KBM-7 (cell line): ENCODE measurements at regions of chr10 and their contacts with region 1.

Region 1: GRCh38 chr10:21265621-21266020 is 259.9 kb downstream of the SKIDA1 start:
- DNase-seq: no peak

Region 2: DNA sequence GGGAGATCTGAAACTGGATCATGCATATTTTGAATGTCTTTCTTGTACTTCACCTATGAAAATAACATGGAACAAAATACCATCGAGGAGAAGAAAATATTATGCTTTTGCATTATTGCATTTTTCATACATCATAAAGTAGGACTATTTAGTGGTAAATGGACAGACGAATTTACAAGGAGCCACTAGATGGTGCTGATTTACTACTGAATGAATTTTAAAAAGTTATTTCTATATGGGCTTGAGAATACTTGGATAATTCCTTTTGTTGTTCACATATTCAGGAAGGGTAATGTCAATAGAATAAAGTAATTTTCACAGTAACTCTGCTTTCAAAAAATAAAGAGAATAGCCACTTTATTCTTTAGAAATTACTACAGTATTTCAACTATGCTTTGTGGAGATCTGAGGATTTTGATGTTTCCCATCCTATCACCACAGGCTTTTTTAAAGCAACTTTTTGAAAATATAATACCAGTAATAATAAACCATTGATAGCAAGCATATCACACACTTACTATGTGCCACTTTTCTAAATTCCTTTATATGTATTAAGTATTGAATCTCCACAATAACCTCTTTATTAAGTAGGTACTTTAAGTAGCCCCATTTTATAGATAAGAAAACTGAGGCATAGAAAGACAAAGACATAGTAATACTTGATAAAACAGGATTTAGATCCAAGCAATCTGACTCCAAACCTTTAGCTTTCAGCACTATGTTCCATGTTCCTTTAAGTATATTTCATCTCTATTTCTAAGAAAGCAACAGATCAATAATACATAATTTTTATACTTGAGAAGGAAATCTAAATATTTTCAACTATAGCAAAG is 407.1 kb before region 1 on chr10:
- in situ Hi-C with region 1: loop called (anchors 25 kb)
- DNase-seq: peak; percentile 26

Region 3: GRCh38 chr10:21078410-21079329 is 187.0 kb before region 1 on chr10:
- in situ Hi-C with region 1: loop called (anchors 25 kb)
- DNase-seq: peak; percentile 54